Psoas muscle (tissue), 8 donors: ENCODE measurements at regions of chr4 and their contacts with region 1.

Region 1: GRCh38 chr4:118746292-118746919 is 61.2 kb downstream of the METTL14 start:
- DNase-seq: peak in 1 of 2 donors; percentile 59
- ATAC-seq: peak; percentile 84 to 96 (median 92)
- H3K4me3 ChIP-seq: no peak overlapping the region
- H3K27ac ChIP-seq: peak overlapping the region; percentile 43
- H3K4me1 ChIP-seq: peaks cover 27% of the 10 kb centered on the region
- H3K27me3 ChIP-seq: no peaks in the 10 kb centered on the region
- CTCF ChIP-seq: no peak

Region 2: DNA sequence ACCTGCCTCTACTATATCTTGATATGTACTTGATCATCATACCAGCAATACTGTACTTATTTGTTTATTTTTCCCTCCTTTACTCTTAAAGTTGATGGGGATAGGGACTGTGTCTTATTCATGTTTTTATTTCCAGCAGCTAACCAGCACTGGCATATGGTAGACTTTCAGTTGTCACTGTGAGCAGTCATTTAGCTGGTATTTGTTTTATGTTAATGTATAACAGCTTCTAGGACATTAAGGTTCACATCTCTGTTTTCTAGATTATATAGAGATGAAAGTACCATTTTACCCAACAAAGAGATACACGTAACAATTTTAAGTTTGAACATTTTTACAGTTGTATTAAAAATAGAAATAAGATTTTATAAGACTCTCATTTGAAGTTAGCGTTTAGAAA is 43.3 kb before region 1 on chr4:
- intact Hi-C with region 1: no loop called
- DNase-seq: no peak
- ATAC-seq: no peak
- H3K4me3 ChIP-seq: no peak overlapping the region
- H3K27ac ChIP-seq: no peak overlapping the region
- H3K4me1 ChIP-seq: no peaks in the 10 kb centered on the region
- H3K27me3 ChIP-seq: no peaks in the 10 kb centered on the region
- CTCF ChIP-seq: no peak

Region 3: DNA sequence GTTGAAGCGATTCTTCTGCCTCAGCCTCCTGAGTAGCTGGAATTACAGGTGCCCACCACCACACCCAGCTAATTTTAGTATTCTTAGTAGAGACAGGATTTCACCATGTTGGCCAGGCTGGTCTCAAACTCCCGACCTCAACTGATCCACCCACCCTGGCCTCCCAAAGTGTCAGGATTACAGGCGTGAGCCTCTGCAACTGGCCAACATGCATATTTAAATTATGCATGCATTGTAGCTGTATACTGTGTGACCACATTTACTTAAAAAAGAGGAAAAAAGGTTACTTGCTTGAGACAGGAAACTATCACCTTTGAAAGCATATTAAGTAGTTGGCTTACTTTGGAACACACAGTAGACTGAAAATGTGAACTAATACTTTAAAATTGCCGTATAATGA is 31.7 kb before region 1 on chr4:
- intact Hi-C with region 1: no loop called
- DNase-seq: no peak
- ATAC-seq: no peak
- H3K4me3 ChIP-seq: no peak overlapping the region
- H3K27ac ChIP-seq: no peak overlapping the region
- H3K4me1 ChIP-seq: no peaks in the 10 kb centered on the region
- H3K27me3 ChIP-seq: no peaks in the 10 kb centered on the region
- CTCF ChIP-seq: no peak

Region 4: GRCh38 chr4:118783887-118784286 is 37.5 kb after region 1 on chr4:
- intact Hi-C with region 1: no loop called
- DNase-seq: peak; percentile 33 to 56
- ATAC-seq: peak in 1 of 4 donors; percentile 48
- H3K4me3 ChIP-seq: no peak overlapping the region
- H3K27ac ChIP-seq: no peak overlapping the region
- H3K4me1 ChIP-seq: no peaks in the 10 kb centered on the region
- H3K27me3 ChIP-seq: no peaks in the 10 kb centered on the region
- CTCF ChIP-seq: no peak

Region 5: DNA sequence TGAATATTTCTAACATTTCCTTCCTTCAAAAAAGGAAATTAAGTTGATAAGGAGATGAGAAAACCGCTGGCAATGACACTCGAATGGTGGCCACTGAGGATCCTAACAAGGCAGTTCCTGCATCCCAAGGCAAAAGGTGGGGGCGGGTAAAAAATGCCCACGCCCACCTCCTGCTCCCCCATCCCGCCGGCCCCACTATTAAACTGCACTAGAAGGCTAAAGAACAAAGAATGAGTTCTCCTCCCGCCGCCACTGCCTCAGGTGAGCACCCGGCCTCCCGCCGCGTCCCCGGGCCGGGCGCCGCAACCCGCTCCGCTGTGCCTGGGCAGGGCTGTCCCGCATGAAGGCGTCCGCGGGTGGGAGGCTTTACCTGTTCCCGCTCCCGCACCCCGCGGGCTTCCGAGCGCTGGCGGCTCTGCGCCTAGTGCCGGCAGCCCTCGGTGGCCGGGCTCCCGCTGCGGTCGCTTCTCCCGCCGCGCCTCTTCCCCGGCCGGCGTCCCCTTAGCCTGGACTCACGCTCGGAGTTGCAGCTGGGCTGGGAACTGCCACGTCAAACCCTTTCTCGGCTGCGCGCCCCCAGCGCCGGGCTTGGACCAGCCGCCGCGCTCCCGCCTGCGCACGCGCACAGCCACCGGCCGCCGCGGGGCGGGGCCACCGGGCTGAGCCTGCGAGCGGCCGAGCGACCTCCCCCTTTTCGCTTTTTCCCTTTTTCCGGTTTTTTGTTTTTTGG is 89.3 kb after region 1 on chr4 and contains the start of gene SEC24D:
- intact Hi-C with region 1: no loop called
- DNase-seq: peak; percentile 92 to 95
- ATAC-seq: peak; percentile 96 to 98 (median 98)
- H3K4me3 ChIP-seq: peak within 1 kb of the TSS; percentile 100
- H3K27ac ChIP-seq: peak within 1 kb of the TSS; percentile 93
- H3K4me1 ChIP-seq: peaks cover 9% of the 10 kb centered on the region
- H3K27me3 ChIP-seq: no peaks in the 10 kb centered on the region
- CTCF ChIP-seq: no peak
- total RNA-seq, gene SEC24D: 5.8 to 13.7 (median 6.3) TPM

Region 6: GRCh38 chr4:118974758-118975157 is 228.4 kb after region 1 on chr4:
- intact Hi-C with region 1: loop called (anchors 5 kb)
- DNase-seq: no peak
- ATAC-seq: peak in 3 of 4 donors; percentile 4 to 20 (median 19)
- H3K4me3 ChIP-seq: peak overlapping the region; percentile 59
- H3K27ac ChIP-seq: peak overlapping the region; percentile 95
- H3K4me1 ChIP-seq: peaks cover 36% of the 10 kb centered on the region
- H3K27me3 ChIP-seq: no peaks in the 10 kb centered on the region
- CTCF ChIP-seq: no peak